ENCODE measurements at regions of chr6 and their contacts with region 1.

Region 1: DNA sequence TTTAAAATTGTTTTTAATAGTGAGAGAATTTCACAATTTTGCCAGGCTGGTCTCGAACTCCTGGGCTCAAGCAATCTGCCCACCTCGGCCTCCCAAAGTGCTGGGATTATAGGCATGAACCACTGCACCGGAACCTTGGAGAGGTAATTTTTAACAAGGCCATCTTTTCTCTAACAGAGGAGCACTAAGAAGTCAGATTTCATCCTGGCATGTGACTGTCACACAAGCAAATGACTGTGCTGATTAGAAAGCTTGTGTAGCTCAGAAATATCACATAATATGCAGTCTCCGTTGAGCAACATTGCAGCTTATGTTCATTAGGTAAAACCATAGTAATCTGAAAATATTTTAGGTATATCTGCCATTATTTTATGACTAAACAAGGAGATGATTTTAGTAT is 156.0 kb downstream of the CCDC170 start:
- DNase-seq: no peak
- ATAC-seq: no peak
- H3K4me3 ChIP-seq: no peak overlapping the region
- H3K27ac ChIP-seq: no peak overlapping the region
- H3K4me1 ChIP-seq: no peaks in the 10 kb centered on the region
- H3K27me3 ChIP-seq: no peaks in the 10 kb centered on the region
- CTCF ChIP-seq: no peak
- EP300 ChIP-seq: no peak
- POLR2A ChIP-seq: no peak
- RAD21 ChIP-seq: no peak

Region 2: DNA sequence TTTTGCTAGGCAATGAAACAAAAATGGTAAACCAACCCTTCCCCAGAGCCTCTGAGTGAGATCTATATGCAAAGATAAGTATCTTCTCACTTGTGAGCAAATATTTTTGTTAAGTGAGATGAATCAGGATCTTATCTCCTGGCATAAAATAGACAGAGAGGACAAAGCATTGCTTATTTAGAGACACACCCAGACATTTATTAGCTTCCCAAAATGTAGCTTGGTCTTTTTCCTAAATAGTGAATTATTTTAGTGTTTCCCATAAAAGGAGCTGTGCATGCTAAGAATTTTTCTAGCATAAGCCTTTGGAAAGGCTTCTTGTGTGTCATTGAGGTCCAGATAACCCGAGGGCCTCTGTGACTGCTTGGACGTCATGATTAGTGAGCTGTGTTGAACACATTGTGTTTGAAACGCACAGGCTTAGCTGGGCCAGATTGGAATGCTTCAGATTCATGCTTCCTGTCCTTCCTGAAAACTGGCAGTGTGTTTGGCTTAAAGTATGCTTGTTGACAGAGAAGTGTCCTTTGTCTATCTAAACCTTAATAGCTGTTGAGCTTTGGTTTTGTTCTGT is 767.8 kb before region 1 on chr6:
- CTCF ChIA-PET with region 1: no interaction called
- POLR2A ChIA-PET with region 1: no interaction called
- RAD21 ChIA-PET with region 1: no interaction called
- SMC1A ChIA-PET with region 1: no interaction called
- in situ Hi-C with region 1: no loop called
- intact Hi-C with region 1: no loop called
- DNase-seq: no peak
- ATAC-seq: no peak
- H3K4me3 ChIP-seq: no peak overlapping the region
- H3K27ac ChIP-seq: no peak overlapping the region
- H3K4me1 ChIP-seq: no peaks in the 10 kb centered on the region
- H3K27me3 ChIP-seq: no peaks in the 10 kb centered on the region
- CTCF ChIP-seq: no peak
- EP300 ChIP-seq: no peak
- POLR2A ChIP-seq: no peak
- RAD21 ChIP-seq: no peak

Region 3: DNA sequence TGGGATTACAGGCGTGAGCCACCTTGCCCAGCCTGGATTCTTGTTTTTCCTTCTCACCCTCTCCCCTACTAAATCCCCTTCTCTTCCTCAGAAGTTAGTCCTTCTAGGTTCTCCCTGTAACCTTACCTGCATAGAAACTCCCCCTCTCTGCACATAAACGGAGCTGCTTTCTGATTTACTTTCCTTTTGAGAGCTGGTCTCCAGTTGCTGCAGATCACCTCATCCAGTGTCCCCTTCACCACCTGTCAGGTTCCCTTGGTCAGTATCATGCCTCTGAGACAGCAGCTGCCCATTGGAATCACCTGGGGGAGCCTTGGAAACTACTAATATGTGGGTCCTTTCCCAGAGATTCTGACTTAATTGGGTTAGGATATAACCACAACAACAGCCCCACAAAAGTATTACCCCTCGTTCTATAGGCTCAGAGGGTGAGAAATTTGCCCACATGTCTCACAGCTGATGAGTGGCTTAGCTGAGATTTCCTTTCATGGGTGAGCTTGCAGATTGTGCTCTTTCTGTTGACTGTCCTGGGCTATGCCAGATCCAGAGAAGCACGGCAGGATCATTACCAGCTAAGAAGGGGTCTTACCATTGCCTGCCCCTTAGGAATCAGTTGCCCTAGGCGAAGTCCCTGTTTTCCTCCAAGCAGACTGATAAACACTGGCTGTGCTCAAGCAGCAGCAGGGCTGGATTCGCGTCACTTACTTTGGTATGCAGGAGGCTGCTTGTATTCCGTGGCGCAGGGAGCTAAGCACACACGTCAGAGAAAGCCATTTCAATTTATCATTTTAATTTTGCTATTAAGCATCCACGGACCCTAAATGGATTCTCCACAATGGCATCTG is 358.7 kb before region 1 on chr6:
- CTCF ChIA-PET with region 1: no interaction called
- POLR2A ChIA-PET with region 1: interaction called, 11 read pairs
- RAD21 ChIA-PET with region 1: no interaction called
- SMC1A ChIA-PET with region 1: no interaction called
- in situ Hi-C with region 1: no loop called
- intact Hi-C with region 1: no loop called
- DNase-seq: no peak
- ATAC-seq: no peak
- H3K4me3 ChIP-seq: no peak overlapping the region
- H3K27ac ChIP-seq: no peak overlapping the region
- H3K4me1 ChIP-seq: no peaks in the 10 kb centered on the region
- H3K27me3 ChIP-seq: peaks cover 2 to 3% of the 10 kb centered on the region in 2 experiments; a peak in 2 of 4 replicates
- CTCF ChIP-seq: no peak
- EP300 ChIP-seq: no peak
- POLR2A ChIP-seq: no peak
- RAD21 ChIP-seq: no peak

Region 4: DNA sequence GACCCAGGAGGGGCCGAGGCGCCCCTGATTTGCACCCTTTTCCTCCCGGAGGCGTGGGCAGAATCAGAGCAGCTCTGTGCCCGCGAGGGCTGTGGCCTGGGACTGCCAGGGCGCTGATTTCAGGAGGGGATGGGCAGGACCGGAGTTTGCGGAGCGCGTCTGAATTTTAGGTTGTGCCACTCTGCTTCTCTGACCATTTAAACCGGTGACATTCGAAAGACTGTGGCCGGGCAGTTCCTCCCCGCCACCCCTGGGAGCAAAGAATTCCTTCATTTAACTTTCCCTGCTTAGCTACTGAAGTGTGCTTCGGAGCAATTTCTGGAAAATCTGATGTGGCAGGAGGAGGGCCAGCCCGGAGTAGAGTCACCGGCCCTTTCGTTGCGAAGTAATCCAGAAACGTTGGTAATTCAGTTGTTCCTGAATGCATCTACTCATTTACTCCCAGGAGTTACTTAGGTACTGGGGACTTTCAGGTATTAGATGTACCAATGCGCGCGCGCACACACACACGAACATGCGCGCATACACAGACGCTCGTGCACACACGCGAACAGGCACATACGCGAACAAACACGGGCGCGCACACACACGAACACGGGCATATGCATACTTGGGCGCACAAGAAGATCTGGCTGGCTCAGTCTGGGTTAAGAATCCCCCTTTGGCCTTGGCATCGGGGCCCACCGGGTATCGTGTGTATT is 155.4 kb before region 1 on chr6:
- CTCF ChIA-PET with region 1: no interaction called
- POLR2A ChIA-PET with region 1: no interaction called
- RAD21 ChIA-PET with region 1: no interaction called
- SMC1A ChIA-PET with region 1: no interaction called
- in situ Hi-C with region 1: no loop called
- intact Hi-C with region 1: no loop called
- DNase-seq: no peak
- ATAC-seq: peak; percentile 53
- H3K4me3 ChIP-seq: peak overlapping the region; percentile 50
- H3K27ac ChIP-seq: no peak overlapping the region
- H3K4me1 ChIP-seq: peaks cover 2% of the 10 kb centered on the region
- H3K27me3 ChIP-seq: peaks cover 3 to 6% of the 10 kb centered on the region in 2 experiments; a peak in 3 of 4 replicates
- CTCF ChIP-seq: no peak
- EP300 ChIP-seq: no peak
- POLR2A ChIP-seq: no peak
- RAD21 ChIP-seq: no peak